HEK293 (cell line): ENCODE measurements at regions of chr10 and their contacts with region 1.

Region 1: DNA sequence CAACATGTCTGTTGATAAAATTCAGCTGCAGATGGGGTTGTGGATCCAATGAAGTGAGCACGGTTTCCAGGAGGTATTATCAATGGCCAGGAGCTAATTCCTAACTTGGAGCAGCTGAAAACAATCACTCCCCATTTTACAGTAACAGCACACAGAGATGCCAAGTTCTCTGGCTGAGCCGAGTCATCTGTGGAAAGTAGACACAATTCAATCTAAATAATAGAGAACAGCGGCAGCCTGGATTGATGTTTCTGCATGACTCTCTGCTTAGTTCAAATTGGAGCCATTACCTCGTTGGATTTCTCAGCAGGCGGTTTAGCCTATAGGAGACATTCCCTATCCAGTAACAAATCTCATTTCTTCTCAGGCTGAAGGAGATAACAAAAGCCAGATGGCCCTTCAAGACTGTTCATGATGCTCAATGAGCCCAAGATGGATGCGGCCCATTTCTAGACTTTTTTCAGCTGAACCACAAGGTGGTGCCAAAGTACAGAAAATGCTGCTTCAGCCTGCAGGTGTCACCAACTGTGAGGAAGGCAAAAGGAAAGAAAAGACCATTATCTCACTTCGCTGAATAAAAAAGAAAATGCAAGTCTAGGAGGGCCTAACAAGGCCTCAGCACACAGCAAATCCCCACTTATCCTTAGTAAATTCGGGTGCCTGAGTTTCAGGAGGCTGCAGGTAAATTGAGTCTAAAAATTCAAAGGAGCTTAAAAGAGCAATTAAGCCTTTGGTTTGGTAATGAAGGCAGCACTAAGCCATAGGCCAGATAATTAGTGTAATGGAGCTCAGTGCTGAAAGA is 83.7 kb downstream of the SLC16A9 start:
- H3K4me3 ChIP-seq: no peak overlapping the region
- H3K27ac ChIP-seq: no peak overlapping the region
- H3K4me1 ChIP-seq: no peaks in the 10 kb centered on the region
- CTCF ChIP-seq: peak; percentile 91

Region 2: GRCh38 chr10:58952747-58953466 is 673.0 kb before region 1 on chr10:
- CTCF ChIA-PET with region 1: interaction called, 20 read pairs
- POLR2A ChIA-PET with region 1: no interaction called
- H3K4me3 ChIP-seq: no peak overlapping the region
- H3K27ac ChIP-seq: no peak overlapping the region
- H3K4me1 ChIP-seq: no peaks in the 10 kb centered on the region
- CTCF ChIP-seq: peak; percentile 61

Region 3: DNA sequence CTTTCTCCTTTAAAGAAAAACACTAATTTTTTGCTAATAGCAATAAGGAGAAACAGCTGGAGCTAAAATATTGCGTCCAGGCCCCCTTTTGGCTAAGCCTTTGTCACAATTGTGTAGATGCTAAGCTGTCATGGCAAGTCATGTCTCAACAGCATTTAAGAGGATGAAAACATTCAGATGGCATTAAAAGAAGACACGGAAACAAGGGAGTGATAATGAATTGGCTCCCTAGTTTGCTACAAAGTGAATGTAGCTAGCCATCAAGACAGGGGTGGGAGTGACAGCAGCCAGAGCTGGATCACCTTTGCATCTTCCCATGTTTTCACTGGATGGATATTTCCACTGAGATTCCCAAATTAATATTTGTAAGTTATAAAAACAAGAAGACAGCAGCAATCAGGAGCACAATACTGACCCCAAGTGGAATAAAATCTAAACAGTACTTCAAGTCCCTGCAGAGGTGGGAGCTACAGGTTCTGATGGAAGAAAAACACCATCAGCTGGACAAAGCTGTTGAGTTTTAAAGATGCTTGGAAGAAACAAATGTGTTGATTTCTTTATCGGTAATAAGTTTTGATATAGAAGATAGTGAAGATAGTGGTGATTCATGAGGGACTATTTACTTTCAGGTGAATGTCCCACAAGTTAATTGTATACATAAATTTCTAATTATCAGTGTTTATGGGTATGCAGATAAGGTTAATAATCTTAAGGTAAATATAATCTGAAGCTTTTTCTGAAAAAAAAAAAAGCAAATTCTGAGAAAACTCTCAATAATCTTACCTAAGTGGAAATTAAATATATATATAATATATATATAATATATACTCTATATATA is 45.7 kb before region 1 on chr10:
- CTCF ChIA-PET with region 1: interaction called, 16 read pairs
- POLR2A ChIA-PET with region 1: no interaction called
- H3K4me3 ChIP-seq: no peak overlapping the region
- H3K27ac ChIP-seq: no peak overlapping the region
- H3K4me1 ChIP-seq: no peaks in the 10 kb centered on the region
- CTCF ChIP-seq: 0 out of 2 replicates have a peak, but pooled peaks have one; percentile 15

Region 4: DNA sequence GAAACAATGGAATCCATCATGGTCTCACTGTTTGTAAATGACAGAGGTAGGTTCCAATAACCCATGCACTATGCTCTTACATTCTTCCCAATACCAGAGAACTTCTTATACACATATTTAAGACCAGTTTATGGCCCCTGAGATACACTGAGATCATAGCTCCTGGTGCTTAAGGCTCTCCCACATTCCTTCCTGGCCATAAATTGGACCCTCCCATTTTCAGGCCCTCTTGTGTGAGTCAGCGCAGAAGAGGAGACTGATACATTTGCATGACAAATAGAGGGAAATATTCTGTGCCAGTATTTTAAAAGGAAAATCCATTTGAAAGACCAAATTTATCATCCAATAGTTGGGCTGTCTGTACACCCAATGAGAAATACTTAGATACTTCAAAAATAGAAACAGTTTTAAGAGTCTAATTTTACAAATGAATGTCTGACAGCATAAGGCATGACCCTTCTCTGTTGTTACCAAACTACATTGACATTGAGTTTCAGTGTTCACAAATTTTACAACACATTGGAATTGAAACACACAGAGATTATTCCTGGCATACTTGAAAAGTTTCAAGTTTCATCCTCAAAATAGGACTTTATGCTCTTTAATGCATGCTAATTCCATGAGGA is 48.4 kb after region 1 on chr10:
- CTCF ChIA-PET with region 1: no interaction called
- POLR2A ChIA-PET with region 1: no interaction called
- H3K4me3 ChIP-seq: no peak overlapping the region
- H3K27ac ChIP-seq: no peak overlapping the region
- H3K4me1 ChIP-seq: no peaks in the 10 kb centered on the region
- CTCF ChIP-seq: no peak

Region 5: DNA sequence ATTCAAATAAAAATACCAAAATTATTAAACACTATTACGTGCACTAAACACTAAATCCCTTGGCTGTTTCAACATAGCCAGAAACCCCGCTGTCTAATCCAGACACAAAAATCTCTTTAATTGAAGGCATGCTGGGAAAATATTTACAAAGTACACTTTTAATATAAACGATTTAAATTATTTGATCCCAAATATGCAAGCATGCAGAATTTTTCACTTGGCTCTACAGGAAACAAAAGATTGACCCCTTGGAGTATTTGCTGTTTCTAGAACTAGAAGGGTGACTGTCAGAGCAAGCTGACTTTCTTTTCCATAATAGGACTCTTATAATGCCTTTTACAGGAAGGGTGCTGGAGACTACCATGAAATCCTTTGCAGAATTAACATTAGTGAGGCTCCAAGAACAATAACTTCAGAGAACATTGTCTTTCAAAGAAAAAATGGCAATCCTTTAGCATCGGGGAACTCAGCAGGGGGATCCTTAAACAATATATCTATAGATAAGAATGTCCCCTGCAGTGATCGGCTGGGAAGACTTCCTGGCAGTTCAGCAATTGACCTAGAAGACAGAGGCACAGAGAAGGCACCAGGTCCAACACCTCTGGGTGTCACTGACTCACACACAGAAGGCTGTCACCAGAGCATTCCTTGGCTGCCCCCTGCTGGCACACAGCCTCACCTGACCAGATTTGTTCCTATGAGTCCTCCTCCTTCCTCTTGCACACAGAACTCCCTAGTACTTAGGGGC is 183.1 kb after region 1 on chr10:
- CTCF ChIA-PET with region 1: interaction called, 25 read pairs
- POLR2A ChIA-PET with region 1: no interaction called
- H3K4me3 ChIP-seq: no peak overlapping the region
- H3K27ac ChIP-seq: no peak overlapping the region
- H3K4me1 ChIP-seq: no peaks in the 10 kb centered on the region
- CTCF ChIP-seq: peak; percentile 73

Region 6: DNA sequence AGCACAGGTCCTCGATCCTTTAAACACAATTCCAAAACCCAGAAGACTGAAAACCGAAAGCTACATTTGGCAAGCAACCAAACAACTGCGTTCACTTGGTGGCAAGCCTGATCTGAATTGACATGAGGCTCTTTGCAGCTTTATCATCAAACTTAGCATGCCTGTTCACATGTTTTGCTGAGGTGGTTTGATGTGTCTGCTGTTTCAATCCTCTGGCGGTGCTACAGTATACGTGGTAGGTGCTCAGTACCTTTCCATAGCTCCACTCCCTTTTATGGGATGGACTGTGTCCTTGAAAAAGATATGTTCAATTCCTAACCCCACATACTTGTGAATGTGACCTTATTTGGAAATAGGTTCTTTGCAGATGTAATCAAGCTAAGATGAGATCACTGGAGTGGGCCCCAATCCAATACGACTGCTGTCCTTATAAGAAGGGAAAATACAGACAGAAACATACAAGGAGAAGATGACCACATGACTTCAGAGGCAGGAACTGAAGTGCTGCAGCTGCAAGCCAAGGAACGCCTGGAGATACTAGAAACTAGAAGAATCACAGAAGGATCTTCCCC is 247.1 kb after region 1 on chr10:
- CTCF ChIA-PET with region 1: interaction called, 10 read pairs
- POLR2A ChIA-PET with region 1: no interaction called
- H3K4me3 ChIP-seq: no peak overlapping the region
- H3K27ac ChIP-seq: no peak overlapping the region
- H3K4me1 ChIP-seq: peaks cover 10% of the 10 kb centered on the region
- CTCF ChIP-seq: no peak